ENCODE measurements at regions of chr17 and their contacts with region 1.

Region 1: DNA sequence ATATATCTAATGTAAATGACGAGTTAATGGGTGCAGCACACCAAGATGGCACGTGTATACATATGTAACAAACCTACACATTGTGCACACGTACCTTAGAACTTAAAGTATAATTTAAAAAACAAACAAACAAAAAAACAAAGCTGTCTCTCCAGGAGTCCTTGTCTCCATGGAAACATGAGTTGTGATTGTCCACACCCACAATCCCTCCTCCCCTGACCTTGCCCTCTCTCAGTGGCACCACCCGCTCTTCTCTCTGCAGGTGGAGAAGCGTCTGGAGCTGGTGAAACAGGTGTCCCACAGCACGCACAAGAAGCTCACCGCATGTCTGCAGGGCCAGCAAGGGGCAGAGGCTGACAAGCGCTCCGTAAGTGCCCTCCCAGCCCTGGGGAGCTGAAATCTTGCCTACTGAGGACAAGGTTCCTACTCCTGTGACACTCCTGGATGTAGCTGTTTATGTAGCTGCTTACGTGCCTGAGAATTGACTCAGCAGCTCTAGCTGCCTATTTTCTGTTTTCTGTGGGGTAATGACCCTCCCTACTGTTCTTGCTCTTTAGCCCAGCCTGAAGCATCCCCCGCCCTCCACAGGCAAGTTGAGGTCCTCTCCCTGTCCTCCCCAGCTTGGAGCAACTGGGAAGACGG is 107.0 kb downstream of the ARHGAP44 start:
- DNase-seq: no peak
- ATAC-seq: no peak
- H3K4me3 Mint-ChIP-seq: no peak overlapping the region
- H3K27ac Mint-ChIP-seq: no peak overlapping the region
- H3K4me1 Mint-ChIP-seq: no peaks in the 10 kb centered on the region
- H3K27me3 Mint-ChIP-seq: no peaks in the 10 kb centered on the region
- CTCF ChIP-seq: no peak

Region 2: GRCh38 chr17:12296209-12296625 is 600.0 kb before region 1 on chr17:
- CTCF ChIA-PET with region 1: no interaction called
- POLR2A ChIA-PET with region 1: interaction called, 10 read pairs
- intact Hi-C with region 1: no loop called
- DNase-seq: no peak
- ATAC-seq: no peak
- H3K4me3 Mint-ChIP-seq: no peak overlapping the region
- H3K27ac Mint-ChIP-seq: no peak overlapping the region
- H3K4me1 Mint-ChIP-seq: no peaks in the 10 kb centered on the region
- H3K27me3 Mint-ChIP-seq: no peaks in the 10 kb centered on the region
- CTCF ChIP-seq: no peak

Measured in activated B cell treated with CpG ODN at 0.5 μM for 24 hours (primary cell).